Endothelial cell of umbilical vein (primary cell): ENCODE measurements at regions of chr5 and their contacts with region 1.

Region 1: DNA sequence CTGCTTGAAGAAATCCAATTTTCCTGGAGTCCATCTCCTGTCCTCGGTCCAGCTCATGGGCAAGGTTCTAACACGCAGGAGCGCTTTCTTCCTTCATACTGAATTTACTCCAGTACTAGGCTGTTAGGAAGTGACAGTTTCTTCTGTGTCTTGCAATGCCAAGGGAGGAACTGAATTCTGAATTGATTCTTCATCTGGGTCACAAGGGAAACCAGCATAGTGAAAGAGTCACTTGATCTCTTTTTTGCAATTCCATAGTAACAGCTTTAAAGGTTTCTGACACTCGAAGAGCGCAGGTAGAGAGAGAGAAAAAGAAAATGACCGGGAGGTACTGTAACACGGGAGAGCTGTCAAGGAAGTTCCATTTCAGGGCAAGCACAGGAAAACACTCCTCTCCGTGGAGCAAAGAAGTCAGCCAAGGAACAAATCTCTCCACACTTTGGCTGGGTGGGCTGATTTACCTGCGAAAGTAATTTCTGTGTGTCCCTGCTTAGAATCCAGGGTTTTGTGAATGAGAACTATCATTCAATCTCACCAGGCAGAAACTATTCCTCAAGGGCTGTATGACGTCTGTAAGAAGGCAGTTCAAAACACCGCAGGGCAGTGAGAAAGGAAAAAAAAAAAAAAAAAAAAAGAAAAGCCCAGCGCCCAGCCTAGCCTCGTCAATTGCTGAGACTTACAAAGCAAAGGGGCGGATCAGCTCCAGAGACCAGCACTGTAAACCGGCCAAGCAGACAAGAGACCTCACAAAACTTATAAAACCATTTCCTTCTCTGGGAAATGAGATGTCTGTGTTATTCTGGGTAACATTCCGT is 617.8 kb downstream of the PDE4D start:
- DNase-seq: peak; percentile 85
- H3K4me3 ChIP-seq: peak overlapping the region; percentile 34 to 97 (median 52)
- H3K27ac ChIP-seq: peak overlapping the region; percentile 90
- H3K4me1 ChIP-seq: peaks cover 25% of the 10 kb centered on the region
- H3K27me3 ChIP-seq: no peaks in the 10 kb centered on the region
- CTCF ChIP-seq: no peak
- POLR2A ChIP-seq: peak; percentile 5

Region 2: GRCh38 chr5:59218424-59219045 is 57.2 kb before region 1 on chr5:
- CTCF ChIA-PET with region 1: interaction called, 9 read pairs
- POLR2A ChIA-PET with region 1: no interaction called
- dilution Hi-C with region 1: no loop called
- intact Hi-C with region 1: loop called (anchors 2 kb)
- DNase-seq: peak; percentile 54
- H3K4me3 ChIP-seq: no peak overlapping the region
- H3K27ac ChIP-seq: no peak overlapping the region
- H3K4me1 ChIP-seq: peaks cover 19% of the 10 kb centered on the region
- H3K27me3 ChIP-seq: no peaks in the 10 kb centered on the region
- CTCF ChIP-seq: peak in 1 of 2 donors; percentile 2
- POLR2A ChIP-seq: no peak

Region 3: DNA sequence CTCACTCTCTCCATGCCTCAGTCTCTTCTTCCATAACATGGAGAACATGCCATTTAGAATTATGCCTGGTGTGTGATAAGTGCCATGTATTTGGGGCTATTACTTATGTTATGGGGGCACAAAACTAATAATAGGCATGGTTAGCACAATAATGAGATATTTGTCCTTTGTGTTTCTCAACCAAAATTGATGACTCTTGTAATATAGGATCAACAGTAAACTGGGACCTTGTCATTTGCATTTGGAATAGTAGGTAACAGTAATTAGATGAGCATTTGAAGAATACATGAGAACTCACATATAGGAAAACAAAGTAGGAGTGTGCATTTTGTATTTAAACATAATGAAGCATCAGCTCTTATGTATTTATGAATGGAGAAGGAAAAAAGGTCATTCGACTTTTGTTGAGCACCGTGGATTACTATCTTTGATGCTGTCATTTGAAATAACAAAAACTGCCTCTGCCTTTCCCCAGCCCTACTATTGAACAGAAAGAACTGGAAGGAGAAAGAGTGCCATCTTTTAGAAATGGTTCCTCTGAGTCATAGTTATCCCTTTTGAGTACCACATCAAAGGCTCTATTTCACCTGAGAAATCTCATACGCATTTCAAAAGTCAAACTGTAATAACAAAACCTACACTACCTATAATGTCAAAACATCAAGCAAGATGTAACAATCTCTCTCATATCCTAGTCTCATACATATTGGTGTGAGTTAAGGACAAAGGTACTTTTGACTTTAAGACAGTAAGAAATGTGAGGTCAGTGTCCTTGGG is 37.4 kb before region 1 on chr5:
- CTCF ChIA-PET with region 1: interaction called, 4 read pairs
- POLR2A ChIA-PET with region 1: no interaction called
- dilution Hi-C with region 1: no loop called
- intact Hi-C with region 1: loop called (anchors 5 kb)
- DNase-seq: no peak
- H3K4me3 ChIP-seq: no peak overlapping the region
- H3K27ac ChIP-seq: no peak overlapping the region
- H3K4me1 ChIP-seq: peaks cover 25% of the 10 kb centered on the region
- H3K27me3 ChIP-seq: no peaks in the 10 kb centered on the region
- CTCF ChIP-seq: no peak
- POLR2A ChIP-seq: no peak

Region 4: DNA sequence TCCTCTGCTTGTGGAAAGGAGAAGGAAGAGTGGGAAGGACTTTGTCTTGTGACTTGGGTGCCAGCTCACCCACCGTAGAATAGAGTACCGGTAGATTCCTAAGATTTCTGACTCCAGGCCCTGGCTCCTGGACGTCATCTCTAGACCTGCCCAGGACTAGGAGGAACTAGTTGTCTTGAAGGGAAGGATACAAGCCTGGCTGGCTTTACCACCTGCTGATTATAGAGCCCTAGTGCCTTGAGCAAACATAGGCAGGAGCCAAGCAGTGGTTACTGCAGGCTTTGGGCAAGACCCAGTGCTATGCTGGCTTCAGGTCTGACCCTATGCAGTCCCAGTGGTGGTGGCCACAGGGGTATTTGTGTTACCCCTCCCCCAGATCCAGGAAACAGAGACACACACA is 11.6 kb after region 1 on chr5:
- CTCF ChIA-PET with region 1: interaction called, 5 read pairs
- POLR2A ChIA-PET with region 1: no interaction called
- dilution Hi-C with region 1: no loop called
- intact Hi-C with region 1: loop called (anchors 1 kb)
- DNase-seq: no peak
- H3K4me3 ChIP-seq: no peak overlapping the region
- H3K27ac ChIP-seq: peak overlapping the region; percentile 92
- H3K4me1 ChIP-seq: peaks cover 29% of the 10 kb centered on the region
- H3K27me3 ChIP-seq: no peaks in the 10 kb centered on the region
- CTCF ChIP-seq: no peak
- POLR2A ChIP-seq: no peak

Region 5: GRCh38 chr5:59387127-59387526 is 111.4 kb after region 1 on chr5:
- CTCF ChIA-PET with region 1: no interaction called
- POLR2A ChIA-PET with region 1: no interaction called
- dilution Hi-C with region 1: no loop called
- intact Hi-C with region 1: no loop called
- DNase-seq: no peak
- H3K4me3 ChIP-seq: no peak overlapping the region
- H3K27ac ChIP-seq: no peak overlapping the region
- H3K4me1 ChIP-seq: no peaks in the 10 kb centered on the region
- H3K27me3 ChIP-seq: no peaks in the 10 kb centered on the region
- CTCF ChIP-seq: no peak
- POLR2A ChIP-seq: no peak

Region 6: GRCh38 chr5:59485629-59486439 is 210.1 kb after region 1 on chr5:
- CTCF ChIA-PET with region 1: no interaction called
- POLR2A ChIA-PET with region 1: no interaction called
- dilution Hi-C with region 1: no loop called
- intact Hi-C with region 1: no loop called
- DNase-seq: peak; percentile 59
- H3K4me3 ChIP-seq: no peak overlapping the region
- H3K27ac ChIP-seq: no peak overlapping the region
- H3K4me1 ChIP-seq: no peaks in the 10 kb centered on the region
- H3K27me3 ChIP-seq: no peaks in the 10 kb centered on the region
- CTCF ChIP-seq: no peak
- POLR2A ChIP-seq: no peak

Region 7: GRCh38 chr5:59624898-59625297 is 349.2 kb after region 1 on chr5:
- CTCF ChIA-PET with region 1: no interaction called
- POLR2A ChIA-PET with region 1: no interaction called
- dilution Hi-C with region 1: no loop called
- intact Hi-C with region 1: no loop called
- DNase-seq: no peak
- H3K4me3 ChIP-seq: no peak overlapping the region
- H3K27ac ChIP-seq: no peak overlapping the region
- H3K4me1 ChIP-seq: no peaks in the 10 kb centered on the region
- H3K27me3 ChIP-seq: no peaks in the 10 kb centered on the region
- CTCF ChIP-seq: no peak
- POLR2A ChIP-seq: no peak